B cell (primary cell): ENCODE measurements at regions of chr19 and their contacts with region 1.

Region 1: GRCh38 chr19:37896180-37896579 is 10.2 kb downstream of the WDR87 start:
- DNase-seq: no peak
- ATAC-seq: no peak
- H3K4me3 ChIP-seq: no peak overlapping the region
- H3K4me3 Mint-ChIP-seq: no peak overlapping the region
- H3K27ac ChIP-seq: no peak overlapping the region
- H3K27ac Mint-ChIP-seq: no peak overlapping the region
- H3K4me1 ChIP-seq: peaks cover 6 to 10% of the 10 kb centered on the region in 2 donors
- H3K4me1 Mint-ChIP-seq: peaks cover 10% of the 10 kb centered on the region
- H3K27me3 ChIP-seq: peaks cover 0 to 7% (median 3%) of the 10 kb centered on the region in 4 experiments
- H3K27me3 Mint-ChIP-seq: peaks cover 16% of the 10 kb centered on the region
- CTCF ChIP-seq: no peak

Region 2: GRCh38 chr19:37779127-37780005 is 116.8 kb before region 1 on chr19 and contains the start of gene ZNF573:
- CTCF ChIA-PET with region 1: no interaction called
- POLR2A ChIA-PET with region 1: no interaction called
- intact Hi-C with region 1: no loop called
- DNase-seq: peak; percentile 91
- ATAC-seq: peak; percentile 84
- H3K4me3 ChIP-seq: peak within 1 kb of the TSS; percentile 71 to 81 (median 74)
- H3K4me3 Mint-ChIP-seq: peak within 1 kb of the TSS; percentile 96
- H3K27ac ChIP-seq: peak within 1 kb of the TSS; percentile 86 to 93
- H3K27ac Mint-ChIP-seq: peak within 1 kb of the TSS; percentile 97
- H3K4me1 ChIP-seq: peaks cover 7 to 11% of the 10 kb centered on the region in 2 donors
- H3K4me1 Mint-ChIP-seq: peaks cover 39% of the 10 kb centered on the region
- H3K27me3 ChIP-seq: no peaks in the 10 kb centered on the region
- H3K27me3 Mint-ChIP-seq: no peaks in the 10 kb centered on the region
- CTCF ChIP-seq: peak; percentile 18
- total RNA-seq, gene ZNF573: 28.8 and 31.1 TPM in 2 replicates

Region 3: GRCh38 chr19:38134540-38135149 is 238.5 kb after region 1 on chr19:
- CTCF ChIA-PET with region 1: interaction called, 62 read pairs
- POLR2A ChIA-PET with region 1: no interaction called
- intact Hi-C with region 1: no loop called
- DNase-seq: peak; percentile 64
- ATAC-seq: no peak
- H3K4me3 ChIP-seq: no peak overlapping the region
- H3K4me3 Mint-ChIP-seq: no peak overlapping the region
- H3K27ac ChIP-seq: no peak overlapping the region
- H3K27ac Mint-ChIP-seq: peak overlapping the region; percentile 41
- H3K4me1 ChIP-seq: no peaks in the 10 kb centered on the region
- H3K4me1 Mint-ChIP-seq: no peaks in the 10 kb centered on the region
- H3K27me3 ChIP-seq: no peaks in the 10 kb centered on the region
- H3K27me3 Mint-ChIP-seq: no peaks in the 10 kb centered on the region
- CTCF ChIP-seq: peak; percentile 75

Region 4: GRCh38 chr19:38142176-38143035 is 246.2 kb after region 1 on chr19:
- CTCF ChIA-PET with region 1: interaction called, 62 read pairs
- POLR2A ChIA-PET with region 1: interaction called, 11 read pairs
- intact Hi-C with region 1: loop called (anchors 2 kb)
- DNase-seq: peak; percentile 49
- ATAC-seq: peak; percentile 66
- H3K4me3 ChIP-seq: no peak overlapping the region
- H3K4me3 Mint-ChIP-seq: no peak overlapping the region
- H3K27ac ChIP-seq: no peak overlapping the region
- H3K27ac Mint-ChIP-seq: peak overlapping the region; percentile 74
- H3K4me1 ChIP-seq: no peaks in the 10 kb centered on the region
- H3K4me1 Mint-ChIP-seq: no peaks in the 10 kb centered on the region
- H3K27me3 ChIP-seq: no peaks in the 10 kb centered on the region
- H3K27me3 Mint-ChIP-seq: no peaks in the 10 kb centered on the region
- CTCF ChIP-seq: peak; percentile 51

Region 5: GRCh38 chr19:38250821-38251563 is 354.8 kb after region 1 on chr19:
- CTCF ChIA-PET with region 1: interaction called, 36 read pairs
- POLR2A ChIA-PET with region 1: no interaction called
- intact Hi-C with region 1: loop called (anchors 5 kb)
- DNase-seq: no peak
- ATAC-seq: no peak
- H3K4me3 ChIP-seq: no peak overlapping the region
- H3K4me3 Mint-ChIP-seq: peak overlapping the region; percentile 69
- H3K27ac ChIP-seq: no peak overlapping the region
- H3K27ac Mint-ChIP-seq: peak overlapping the region; percentile 91
- H3K4me1 ChIP-seq: peaks cover 48 to 51% of the 10 kb centered on the region in 2 donors
- H3K4me1 Mint-ChIP-seq: peaks cover 53% of the 10 kb centered on the region
- H3K27me3 ChIP-seq: no peaks in the 10 kb centered on the region
- H3K27me3 Mint-ChIP-seq: no peaks in the 10 kb centered on the region
- CTCF ChIP-seq: no peak